ENCODE measurements at regions of chr6 and their contacts with region 1.

Region 1: GRCh38 chr6:152982768-152983636 is at the start of gene FBXO5:
- DNase-seq: peak; percentile 99
- H3K4me3 ChIP-seq: peak within 1 kb of the TSS; percentile 67 to 77 (median 70)
- H3K27ac ChIP-seq: peak within 1 kb of the TSS; percentile 94 to 97 (median 95)
- H3K4me1 ChIP-seq: peaks cover 0 to 34% (median 25%) of the 10 kb centered on the region in 4 donors
- H3K27me3 ChIP-seq: no peaks in the 10 kb centered on the region
- CTCF ChIP-seq: no peak
- EP300 ChIP-seq: peak in 2 of 4 donors; percentile 8 to 23
- POLR2A ChIP-seq: no peak
- total RNA-seq, gene FBXO5: 1.9 to 6.4 (median 2.7) TPM

Region 2: GRCh38 chr6:153002607-153003365 is 19.8 kb after region 1 on chr6 and contains the start of gene MTRF1L:
- intact Hi-C with region 1: loop called (anchors 2 kb)
- DNase-seq: peak; percentile 97
- H3K4me3 ChIP-seq: peak within 1 kb of the TSS; percentile 63 to 77 (median 64)
- H3K27ac ChIP-seq: peak within 1 kb of the TSS; percentile 86 to 90 (median 88)
- H3K4me1 ChIP-seq: peaks cover 0 to 42% (median 33%) of the 10 kb centered on the region in 4 donors
- H3K27me3 ChIP-seq: no peaks in the 10 kb centered on the region
- CTCF ChIP-seq: no peak
- EP300 ChIP-seq: peak in 2 of 4 donors; percentile 31 to 60
- POLR2A ChIP-seq: peak; percentile 66 to 75
- total RNA-seq, gene MTRF1L: 14.3 to 25.3 (median 18.5) TPM

Region 3: GRCh38 chr6:153272201-153272980 is 289.4 kb after region 1 on chr6:
- intact Hi-C with region 1: no loop called
- DNase-seq: no peak
- H3K4me3 ChIP-seq: no peak overlapping the region
- H3K27ac ChIP-seq: no peak overlapping the region
- H3K4me1 ChIP-seq: no peaks in the 10 kb centered on the region
- H3K27me3 ChIP-seq: no peaks in the 10 kb centered on the region
- CTCF ChIP-seq: no peak
- EP300 ChIP-seq: no peak
- POLR2A ChIP-seq: no peak

Measured in sigmoid colon (tissue), 7 donors.